OCI-LY7 (cell line): ENCODE measurements at regions of chr11 and their contacts with region 1.

Region 1: GRCh38 chr11:36292311-36292722 is 3.1 kb upstream of the COMMD9 start:
- DNase-seq: peak; percentile 72
- H3K4me3 ChIP-seq: no peak overlapping the region
- H3K27ac ChIP-seq: no peak overlapping the region
- H3K4me1 ChIP-seq: peaks cover 11% of the 10 kb centered on the region
- CTCF ChIP-seq: peak; percentile 86

Region 2: GRCh38 chr11:36354221-36355003 is 62.1 kb after region 1 on chr11:
- CTCF ChIA-PET with region 1: interaction called, 3 read pairs
- POLR2A ChIA-PET with region 1: no interaction called
- intact Hi-C with region 1: loop called (anchors 5 kb)
- DNase-seq: no peak
- H3K4me3 ChIP-seq: no peak overlapping the region
- H3K27ac ChIP-seq: no peak overlapping the region
- H3K4me1 ChIP-seq: peaks cover 57% of the 10 kb centered on the region
- CTCF ChIP-seq: no peak

Region 3: DNA sequence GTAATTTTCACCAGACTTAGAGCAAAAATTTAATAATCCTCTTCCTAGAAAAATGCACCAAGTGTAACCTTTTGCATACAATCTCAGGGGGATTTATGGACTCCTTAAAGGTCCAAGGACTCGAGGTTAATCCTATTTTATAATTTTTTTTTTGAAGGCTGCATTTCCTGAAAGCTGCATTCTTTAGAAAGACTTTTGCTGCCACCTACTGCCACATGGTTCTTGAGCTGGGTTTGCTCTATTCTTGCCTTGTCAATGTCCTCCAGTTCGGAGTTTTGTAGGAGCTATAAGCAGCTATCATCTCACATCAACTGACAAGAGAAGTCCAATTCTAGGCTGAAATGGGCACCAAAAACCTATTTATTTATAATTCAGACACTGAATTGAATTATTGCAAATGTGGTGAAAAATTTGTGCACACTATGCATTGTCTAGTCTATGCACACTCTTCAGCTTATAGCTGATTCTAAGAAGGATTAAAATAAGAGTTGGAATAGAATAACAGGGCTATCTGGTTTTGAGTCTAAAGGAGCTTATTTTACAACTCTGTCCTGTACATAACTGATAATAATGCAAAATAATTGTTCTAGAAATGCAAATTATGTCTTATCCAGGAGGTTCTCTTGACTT is 186.5 kb after region 1 on chr11:
- CTCF ChIA-PET with region 1: interaction called, 15 read pairs
- POLR2A ChIA-PET with region 1: interaction called, 6 read pairs
- intact Hi-C with region 1: loop called (anchors 1 kb)
- DNase-seq: peak; percentile 62
- H3K4me3 ChIP-seq: no peak overlapping the region
- H3K27ac ChIP-seq: no peak overlapping the region
- H3K4me1 ChIP-seq: no peaks in the 10 kb centered on the region
- CTCF ChIP-seq: peak; percentile 86

Region 4: DNA sequence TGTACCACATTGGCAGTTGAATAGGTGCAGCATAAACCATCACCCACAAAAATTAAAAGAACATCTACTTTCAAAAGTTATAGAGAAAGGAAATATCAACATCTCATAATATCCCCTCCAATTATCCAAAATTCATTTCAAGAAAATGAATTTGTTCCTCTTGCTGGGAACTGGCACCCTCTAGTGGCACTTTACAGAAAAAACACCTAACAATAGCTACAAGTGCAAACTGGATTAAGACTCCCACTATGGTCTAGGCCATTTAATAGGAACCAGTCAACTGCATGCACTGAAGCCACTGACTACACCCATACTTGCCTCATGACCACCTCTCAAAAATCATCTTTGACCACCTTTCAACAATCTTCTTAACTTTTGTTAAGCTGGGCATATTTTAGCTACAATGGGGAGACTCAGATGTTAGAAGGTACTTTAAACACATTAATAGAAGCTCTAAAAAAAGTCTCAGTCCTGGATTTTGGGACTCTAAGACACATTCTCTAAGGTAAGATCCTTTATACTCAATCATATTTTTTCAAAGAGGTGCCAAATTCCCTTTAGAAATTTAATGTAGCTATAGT is 200.5 kb after region 1 on chr11:
- CTCF ChIA-PET with region 1: interaction called, 16 read pairs
- POLR2A ChIA-PET with region 1: interaction called, 7 read pairs
- intact Hi-C with region 1: loop called (anchors 1 kb)
- DNase-seq: peak; percentile 69
- H3K4me3 ChIP-seq: no peak overlapping the region
- H3K27ac ChIP-seq: no peak overlapping the region
- H3K4me1 ChIP-seq: peaks cover 8% of the 10 kb centered on the region
- CTCF ChIP-seq: peak; percentile 98

Region 5: DNA sequence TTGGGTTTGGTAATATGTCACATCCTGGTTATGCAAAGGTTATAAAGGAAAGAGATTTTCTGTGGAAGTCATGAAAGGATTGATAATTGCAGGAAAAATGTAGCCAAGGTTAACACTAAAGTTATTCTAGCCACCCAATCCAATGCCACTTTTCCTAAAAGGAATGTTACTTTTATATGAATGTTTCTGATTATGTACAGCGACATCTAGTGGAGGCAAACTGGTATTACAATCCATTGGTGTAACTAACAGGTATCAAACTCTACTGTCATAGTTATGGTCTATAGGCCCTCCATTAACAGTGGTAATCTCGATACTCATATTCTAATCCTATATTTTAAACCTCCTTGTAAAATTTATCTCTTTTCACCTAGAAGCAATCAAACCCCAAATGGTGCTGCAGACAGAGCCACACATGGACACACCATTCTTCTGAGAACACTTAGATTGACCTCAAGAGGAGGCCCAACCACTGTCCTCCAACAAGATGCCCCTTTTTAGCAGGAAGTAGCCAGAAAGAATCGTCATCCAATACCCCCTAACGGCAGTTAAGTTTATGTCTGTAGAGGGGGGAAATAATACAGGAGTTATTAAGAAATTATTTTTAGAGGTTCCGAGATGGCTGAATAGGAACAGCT is 380.6 kb after region 1 on chr11:
- CTCF ChIA-PET with region 1: no interaction called
- POLR2A ChIA-PET with region 1: no interaction called
- intact Hi-C with region 1: loop called (anchors 2 kb)
- DNase-seq: peak; percentile 47
- H3K4me3 ChIP-seq: no peak overlapping the region
- H3K27ac ChIP-seq: no peak overlapping the region
- H3K4me1 ChIP-seq: no peaks in the 10 kb centered on the region
- CTCF ChIP-seq: peak; percentile 95

Region 6: DNA sequence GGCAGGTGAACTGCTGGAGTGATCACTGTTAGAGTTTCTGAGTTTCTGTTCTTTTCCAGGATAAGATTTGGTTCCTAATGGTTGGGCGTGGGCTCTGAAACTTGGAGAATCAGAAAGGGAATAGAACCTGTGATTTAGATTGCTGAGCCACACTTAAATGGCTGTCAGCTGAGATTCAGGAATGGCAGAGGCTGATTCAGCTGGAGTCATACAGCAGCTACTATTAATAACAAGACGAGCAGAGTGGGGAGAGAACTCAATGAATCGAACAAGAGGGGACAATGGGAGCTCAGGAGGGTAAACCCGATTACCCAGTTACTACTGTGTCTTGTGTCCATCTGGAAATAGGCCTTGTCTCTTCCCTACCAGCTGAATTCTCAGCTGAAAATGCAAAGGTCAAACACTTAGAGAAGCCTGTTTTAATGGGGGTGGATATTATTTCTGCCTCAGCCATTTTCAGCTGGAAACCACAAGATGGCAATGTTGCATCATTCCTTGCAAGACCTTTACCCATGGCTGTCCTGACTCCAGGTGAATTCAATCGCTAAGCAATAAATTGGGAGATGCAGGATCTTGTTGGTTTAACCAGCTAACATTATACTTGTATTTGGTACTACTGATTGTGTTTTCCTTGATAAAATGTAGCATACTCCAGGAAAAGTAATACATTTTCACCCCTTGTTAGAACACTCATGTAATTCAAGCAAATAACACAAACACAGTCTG is 410.2 kb after region 1 on chr11:
- CTCF ChIA-PET with region 1: no interaction called
- POLR2A ChIA-PET with region 1: no interaction called
- intact Hi-C with region 1: no loop called
- DNase-seq: peak; percentile 46
- H3K4me3 ChIP-seq: no peak overlapping the region
- H3K27ac ChIP-seq: no peak overlapping the region
- H3K4me1 ChIP-seq: no peaks in the 10 kb centered on the region
- CTCF ChIP-seq: peak; percentile 81

Region 7: GRCh38 chr11:36746886-36747710 is 454.8 kb after region 1 on chr11:
- CTCF ChIA-PET with region 1: no interaction called
- POLR2A ChIA-PET with region 1: no interaction called
- intact Hi-C with region 1: loop called (anchors 5 kb)
- DNase-seq: peak; percentile 85
- H3K4me3 ChIP-seq: no peak overlapping the region
- H3K27ac ChIP-seq: no peak overlapping the region
- H3K4me1 ChIP-seq: no peaks in the 10 kb centered on the region
- CTCF ChIP-seq: peak; percentile 100